Astrocyte of the cerebellum (primary cell): ENCODE measurements at regions of chr15 and their contacts with region 1.

Region 1: DNA sequence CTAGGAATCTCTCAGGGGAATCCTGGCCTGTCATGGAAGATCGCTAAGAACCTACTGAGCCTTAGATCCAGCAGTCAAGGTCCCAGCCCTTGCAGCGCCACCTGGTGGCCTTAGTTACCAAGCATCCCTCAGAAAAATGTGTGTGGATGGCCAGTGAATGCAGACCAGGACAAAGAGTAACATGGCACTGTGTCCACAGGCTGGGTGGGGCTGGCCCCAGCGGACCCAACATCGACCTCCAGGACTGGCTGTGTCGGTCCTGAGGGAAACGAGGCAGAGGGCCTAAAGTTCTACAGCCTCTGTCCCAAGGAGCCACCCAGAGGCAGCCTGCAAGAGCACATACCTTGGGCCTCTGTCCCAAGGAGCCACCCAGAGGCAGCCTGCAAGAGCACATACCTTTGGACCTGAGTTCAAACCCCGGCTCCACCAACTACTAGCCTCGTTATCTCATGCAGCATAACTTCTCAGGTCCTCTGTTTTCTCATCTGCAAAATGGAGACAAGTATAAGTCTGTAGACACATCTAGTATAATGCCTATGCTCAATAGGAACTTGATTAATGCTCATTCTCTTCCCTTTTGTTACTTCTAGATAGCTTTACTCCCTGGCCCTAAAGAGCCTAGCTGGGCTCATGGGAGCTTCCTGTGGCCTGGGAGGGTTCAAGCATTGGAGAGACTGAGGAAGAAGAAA is 57.5 kb upstream of the HERC1 start:
- DNase-seq: peak; percentile 33
- H3K4me3 ChIP-seq: no peak overlapping the region
- CTCF ChIP-seq: peak; percentile 91

Region 2: DNA sequence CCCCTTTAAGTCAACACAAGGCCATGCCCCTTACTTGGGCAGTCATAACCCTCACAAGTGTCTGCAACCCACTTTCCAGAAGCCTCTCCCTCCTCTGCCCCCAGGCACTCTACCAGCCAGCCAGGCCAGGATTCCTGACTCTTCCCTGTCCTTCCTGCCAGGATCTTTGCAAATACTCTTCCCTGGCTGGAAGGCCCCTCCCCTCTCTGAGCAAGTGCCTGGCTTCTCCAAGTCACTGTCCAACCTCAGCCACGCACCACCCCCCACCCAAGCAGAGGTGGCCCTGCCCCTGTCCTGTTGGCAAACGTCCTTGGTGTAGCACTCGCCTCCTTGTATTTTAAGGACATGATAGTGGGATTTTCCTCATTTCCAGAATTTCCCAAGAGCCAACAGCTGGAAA is 441.5 kb before region 1 on chr15:
- in situ Hi-C with region 1: no loop called
- DNase-seq: no peak
- H3K4me3 ChIP-seq: no peak overlapping the region
- CTCF ChIP-seq: no peak

Region 3: DNA sequence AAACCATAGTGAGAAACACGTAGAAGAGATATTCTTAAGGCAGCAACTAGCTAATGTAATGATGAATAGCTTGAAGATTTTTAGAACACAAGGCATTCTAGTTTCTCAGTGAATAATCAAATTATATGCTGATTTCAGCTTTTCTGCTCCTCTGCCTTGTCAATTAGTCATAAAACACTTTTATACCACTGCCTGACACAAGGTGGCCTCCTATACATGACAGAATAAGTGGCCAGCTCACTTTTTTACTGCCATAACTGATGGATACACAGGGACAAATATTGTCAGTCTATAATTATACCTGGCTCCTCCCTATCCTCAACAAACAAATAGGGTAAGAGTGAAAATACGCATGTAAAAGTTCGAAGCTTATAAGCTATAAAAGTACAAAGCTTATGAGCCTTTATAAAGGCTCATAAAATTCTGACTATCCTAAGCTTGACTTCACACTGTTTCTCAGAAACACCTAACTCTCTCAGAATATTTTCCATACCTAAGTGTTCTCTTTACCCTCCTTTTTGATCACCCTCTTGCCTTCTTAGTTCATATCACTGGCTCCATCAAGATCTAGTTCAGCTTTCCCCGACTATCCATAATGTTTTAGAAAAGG is 139.0 kb before region 1 on chr15:
- in situ Hi-C with region 1: loop called (anchors 25 kb)
- DNase-seq: peak; percentile 37
- H3K4me3 ChIP-seq: no peak overlapping the region
- CTCF ChIP-seq: peak; percentile 65